Mammary epithelial cell (primary cell): ENCODE measurements at regions of chr14 and their contacts with region 1.

Region 1: GRCh38 chr14:68911594-68912227 is 67.4 kb downstream of the ACTN1 start:
- DNase-seq: peak; percentile 65
- H3K4me3 ChIP-seq: no peak overlapping the region
- H3K27ac ChIP-seq: no peak overlapping the region
- H3K4me1 ChIP-seq: peaks cover 4% of the 10 kb centered on the region
- H3K27me3 ChIP-seq: no peaks in the 10 kb centered on the region
- CTCF ChIP-seq: peak; percentile 98 to 99

Region 2: GRCh38 chr14:68862954-68863594 is 48.6 kb before region 1 on chr14:
- CTCF ChIA-PET with region 1: interaction called, 3 read pairs
- dilution Hi-C with region 1: no loop called
- in situ Hi-C with region 1: no loop called
- intact Hi-C with region 1: loop called (anchors 1 kb)
- DNase-seq: peak; percentile 59
- H3K4me3 ChIP-seq: no peak overlapping the region
- H3K27ac ChIP-seq: no peak overlapping the region
- H3K4me1 ChIP-seq: no peaks in the 10 kb centered on the region
- H3K27me3 ChIP-seq: no peaks in the 10 kb centered on the region
- CTCF ChIP-seq: peak; percentile 75 to 84

Region 3: DNA sequence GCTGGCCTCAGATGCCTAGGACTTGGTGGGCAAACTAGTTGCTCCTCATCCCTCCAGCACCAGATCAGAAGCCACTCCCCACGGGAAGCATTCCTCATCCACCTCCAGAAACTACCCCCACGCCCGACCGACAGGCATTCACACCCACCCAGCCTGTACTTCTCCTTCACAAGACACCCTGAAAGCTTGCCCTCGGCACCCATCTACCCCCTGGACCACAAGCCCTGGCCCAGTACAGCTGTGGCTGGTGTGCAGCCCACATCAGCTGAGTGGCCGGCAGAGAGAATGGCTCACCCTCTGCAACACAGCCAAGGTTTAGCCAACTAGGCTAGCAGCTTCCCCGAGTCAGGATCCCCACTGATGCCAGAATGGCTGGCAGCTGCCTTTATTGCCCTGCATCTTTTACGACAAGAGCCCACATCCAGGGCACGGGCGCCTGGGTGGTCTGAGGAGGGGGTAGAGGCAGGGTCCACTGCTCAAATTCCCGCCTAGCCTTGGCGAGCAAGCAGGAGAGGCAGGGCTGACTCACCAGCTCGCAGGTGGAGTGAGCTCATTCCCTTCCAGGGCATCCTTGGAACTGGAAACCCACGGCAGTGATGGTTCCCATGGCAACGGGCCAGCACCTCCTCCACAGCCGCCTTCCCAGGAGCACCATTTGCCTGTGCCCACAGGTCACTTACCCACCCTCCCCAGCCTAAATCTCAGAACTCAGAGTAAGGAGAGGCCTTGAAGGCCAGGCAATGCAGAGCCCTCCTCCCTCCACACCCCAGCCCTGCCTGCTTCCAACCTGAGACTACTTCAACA is 50.3 kb after region 1 on chr14:
- CTCF ChIA-PET with region 1: no interaction called
- dilution Hi-C with region 1: no loop called
- in situ Hi-C with region 1: no loop called
- intact Hi-C with region 1: loop called (anchors 1 kb)
- DNase-seq: peak; percentile 92
- H3K4me3 ChIP-seq: no peak overlapping the region
- H3K27ac ChIP-seq: peak overlapping the region; percentile 43
- H3K4me1 ChIP-seq: peaks cover 99% of the 10 kb centered on the region
- H3K27me3 ChIP-seq: no peaks in the 10 kb centered on the region
- CTCF ChIP-seq: no peak

Region 4: DNA sequence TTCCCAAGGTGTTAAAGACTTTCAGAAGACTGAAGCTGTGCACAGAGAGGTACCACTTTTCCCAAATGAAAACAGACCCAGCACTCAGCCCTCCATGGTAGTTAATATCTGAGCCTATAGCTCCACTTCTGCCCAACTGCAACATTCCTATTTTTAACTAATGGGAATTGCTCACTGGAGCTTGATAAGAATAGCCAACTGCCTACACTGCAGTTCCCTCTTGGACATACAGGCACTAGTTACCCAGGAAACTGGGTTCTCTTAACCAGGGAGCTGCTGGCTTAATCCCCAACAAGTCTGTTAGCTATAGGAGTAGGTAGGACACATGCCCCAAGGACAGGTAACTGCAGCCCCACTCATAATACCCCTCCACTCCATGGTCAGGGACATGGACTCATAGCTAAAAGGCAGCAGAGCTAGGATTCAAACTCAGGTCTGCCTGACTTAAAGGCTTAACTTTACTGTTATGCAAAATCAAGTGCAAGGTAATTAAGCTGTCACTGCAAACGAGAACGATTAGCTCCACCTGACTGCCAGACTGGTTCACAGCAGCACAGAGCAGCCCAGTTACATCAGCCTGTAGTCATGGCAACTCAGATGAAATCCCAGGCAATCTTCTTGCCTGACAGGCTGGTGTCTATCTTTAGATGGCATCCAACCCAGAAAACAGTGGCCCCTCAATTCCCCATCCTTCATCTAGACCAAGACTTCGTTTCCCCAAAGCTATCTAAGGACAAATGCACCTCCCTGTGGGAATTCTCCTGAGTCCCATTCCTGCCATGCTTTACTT is 144.5 kb after region 1 on chr14:
- CTCF ChIA-PET with region 1: no interaction called
- dilution Hi-C with region 1: no loop called
- in situ Hi-C with region 1: no loop called
- intact Hi-C with region 1: loop called (anchors 2 kb)
- DNase-seq: peak; percentile 40
- H3K4me3 ChIP-seq: no peak overlapping the region
- H3K27ac ChIP-seq: no peak overlapping the region
- H3K4me1 ChIP-seq: no peaks in the 10 kb centered on the region
- H3K27me3 ChIP-seq: no peaks in the 10 kb centered on the region
- CTCF ChIP-seq: peak in 1 of 2 donors; percentile 57

Region 5: DNA sequence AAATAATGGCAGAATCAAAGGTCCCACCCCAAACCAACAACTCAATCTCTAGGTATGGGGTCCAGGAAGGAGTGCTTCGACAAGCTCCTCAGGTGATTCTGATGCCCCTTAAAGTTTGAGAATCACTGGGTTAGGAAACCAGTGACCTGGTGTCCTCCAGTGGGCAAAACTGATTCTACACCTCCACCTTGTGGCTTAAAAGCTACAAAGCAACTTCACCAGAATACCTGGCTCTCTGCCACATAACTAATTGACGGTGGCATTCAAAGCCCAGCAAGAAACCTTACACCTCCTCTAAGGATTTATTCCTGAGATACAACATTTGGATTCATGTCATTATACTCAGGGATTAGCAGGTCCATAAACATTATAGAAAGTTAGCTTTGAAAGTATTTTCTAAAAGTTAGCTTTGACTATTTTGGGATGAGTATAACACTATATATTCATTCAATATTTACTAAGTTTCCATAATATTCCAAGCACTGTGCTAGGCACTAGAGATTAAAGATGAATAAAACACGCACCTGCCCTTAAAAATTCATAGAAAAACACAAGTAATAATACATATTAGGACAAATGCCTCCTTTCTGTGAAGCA is 195.8 kb after region 1 on chr14:
- CTCF ChIA-PET with region 1: no interaction called
- dilution Hi-C with region 1: no loop called
- in situ Hi-C with region 1: no loop called
- intact Hi-C with region 1: loop called (anchors 1 kb)
- DNase-seq: peak; percentile 63
- H3K4me3 ChIP-seq: no peak overlapping the region
- H3K27ac ChIP-seq: no peak overlapping the region
- H3K4me1 ChIP-seq: peaks cover 16% of the 10 kb centered on the region
- H3K27me3 ChIP-seq: no peaks in the 10 kb centered on the region
- CTCF ChIP-seq: peak; percentile 75 to 78

Region 6: DNA sequence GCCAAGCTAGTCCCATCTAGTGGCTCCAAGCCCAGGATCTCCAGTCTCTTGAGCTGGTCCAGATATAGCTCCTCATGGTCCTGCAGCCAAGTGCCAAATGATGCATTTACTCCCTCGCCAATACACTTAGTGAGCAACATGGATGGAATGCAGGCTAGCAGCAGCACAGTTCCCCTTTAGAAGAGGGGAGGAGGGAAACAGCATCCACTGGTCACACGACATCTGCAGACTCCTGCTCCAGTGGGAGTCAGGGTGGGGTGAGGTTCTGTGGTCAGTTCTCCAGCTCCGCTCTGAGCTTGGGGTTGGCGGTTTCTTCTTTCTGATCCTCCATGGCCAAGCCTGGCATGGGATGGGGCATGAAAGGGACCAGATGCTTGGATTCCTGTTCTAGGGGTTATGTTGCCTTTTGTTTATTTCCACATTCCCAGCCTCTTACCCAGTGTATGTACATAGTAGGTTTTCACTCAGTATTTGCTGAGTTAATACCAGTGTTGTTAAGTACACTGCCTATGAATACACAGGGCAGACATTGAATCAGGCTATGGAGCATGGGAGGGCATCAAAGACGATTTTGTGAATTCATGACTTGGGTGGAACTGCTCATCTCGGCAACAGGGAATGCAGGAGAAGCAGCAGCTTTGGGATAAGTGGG is 405.5 kb after region 1 on chr14:
- CTCF ChIA-PET with region 1: no interaction called
- dilution Hi-C with region 1: no loop called
- in situ Hi-C with region 1: no loop called
- intact Hi-C with region 1: no loop called
- DNase-seq: peak; percentile 71
- H3K4me3 ChIP-seq: no peak overlapping the region
- H3K27ac ChIP-seq: no peak overlapping the region
- H3K4me1 ChIP-seq: peaks cover 3% of the 10 kb centered on the region
- H3K27me3 ChIP-seq: no peaks in the 10 kb centered on the region
- CTCF ChIP-seq: no peak

Region 7: GRCh38 chr14:70567791-70568190 is 1656.1 kb after region 1 on chr14:
- CTCF ChIA-PET with region 1: no interaction called
- dilution Hi-C with region 1: no loop called
- in situ Hi-C with region 1: no loop called
- intact Hi-C with region 1: no loop called
- DNase-seq: peak; percentile 43
- H3K4me3 ChIP-seq: no peak overlapping the region
- H3K27ac ChIP-seq: no peak overlapping the region
- H3K4me1 ChIP-seq: no peaks in the 10 kb centered on the region
- H3K27me3 ChIP-seq: no peaks in the 10 kb centered on the region
- CTCF ChIP-seq: peak; percentile 69 to 77